HepG2 (cell line): ENCODE measurements at regions of chr21 and their contacts with region 1.

Region 1: GRCh38 chr21:34795175-34795547 is 126.4 kb downstream of the CLIC6 start:
- DNase-seq: no peak
- ATAC-seq: no peak; the same call in 2 of the 3 replicates
- H3K4me3 ChIP-seq: peak overlapping the region in 1 of 3 experiments; percentile 4; a peak in 1 of 6 replicates
- H3K27ac ChIP-seq: peak overlapping the region; percentile 66
- H3K4me1 ChIP-seq: peaks cover 83% of the 10 kb centered on the region
- H3K27me3 ChIP-seq: no peaks in the 10 kb centered on the region
- CTCF ChIP-seq: 0 out of 2 replicates have a peak, but pooled peaks have one; percentile 11
- EP300 ChIP-seq: no peak
- POLR2A ChIP-seq: no peak
- RAD21 ChIP-seq: no peak

Region 2: DNA sequence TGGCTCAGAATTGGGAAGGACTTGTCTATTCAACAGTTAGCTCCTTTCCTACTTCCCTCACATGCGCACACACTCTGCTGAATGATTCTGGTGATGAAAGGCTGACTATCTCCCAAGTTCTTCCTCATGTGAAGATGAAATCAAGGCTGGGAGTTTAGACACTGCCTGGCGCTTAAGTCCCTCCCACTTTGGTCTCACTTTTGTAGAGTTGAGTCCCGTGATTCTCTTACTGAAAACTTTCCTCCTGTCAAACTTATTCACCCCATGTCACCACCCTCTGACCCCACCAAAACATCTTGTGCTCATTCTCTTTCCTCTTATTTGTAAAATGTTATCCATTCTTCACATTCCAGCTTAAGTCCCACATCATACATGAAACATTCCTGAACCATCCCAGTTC is 730.1 kb before region 1 on chr21:
- CTCF ChIA-PET with region 1: no interaction called
- POLR2A ChIA-PET with region 1: no interaction called
- in situ Hi-C with region 1: no loop called
- intact Hi-C with region 1: no loop called
- DNase-seq: no peak
- ATAC-seq: no peak
- H3K4me3 ChIP-seq: no peak overlapping the region
- H3K27ac ChIP-seq: no peak overlapping the region
- H3K4me1 ChIP-seq: peaks cover 12% of the 10 kb centered on the region
- H3K27me3 ChIP-seq: peaks cover 0 to 18% of the 10 kb centered on the region in 2 experiments; a peak in 2 of 5 replicates
- CTCF ChIP-seq: no peak
- EP300 ChIP-seq: no peak
- POLR2A ChIP-seq: no peak
- RAD21 ChIP-seq: no peak

Region 3: DNA sequence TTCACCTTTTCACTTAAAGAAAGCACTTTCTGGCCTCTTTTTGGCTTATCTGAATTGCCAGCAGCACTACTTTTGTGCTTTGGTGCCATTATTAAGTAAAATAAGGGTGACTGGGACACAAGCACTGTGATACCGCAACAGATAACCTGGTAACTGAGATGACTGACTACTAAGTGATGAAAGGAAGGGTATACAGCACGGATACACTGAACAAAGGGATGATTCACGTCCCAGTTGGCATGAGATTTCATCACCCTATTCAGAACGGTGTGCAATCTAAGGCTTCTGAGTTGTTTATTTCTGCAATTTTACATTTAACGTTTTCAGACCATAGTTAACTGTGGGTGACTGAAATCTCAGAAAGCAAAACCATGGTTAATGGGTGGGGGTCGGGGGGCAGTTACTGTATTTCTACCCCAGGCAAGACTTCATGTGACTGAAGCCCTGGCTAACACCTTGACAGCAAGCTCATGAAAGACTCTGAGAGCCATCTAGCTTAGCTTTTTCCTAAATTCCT is 23.6 kb before region 1 on chr21:
- CTCF ChIA-PET with region 1: no interaction called
- POLR2A ChIA-PET with region 1: interaction called, 4 read pairs
- in situ Hi-C with region 1: no loop called
- intact Hi-C with region 1: loop called (anchors 2 kb)
- DNase-seq: peak; percentile 89
- ATAC-seq: peak; percentile 99
- H3K4me3 ChIP-seq: peak overlapping the region in 2 of 3 experiments; percentile 17 to 50; a peak in 2 of 6 replicates
- H3K27ac ChIP-seq: peak overlapping the region; percentile 81
- H3K4me1 ChIP-seq: peaks cover 44% of the 10 kb centered on the region
- H3K27me3 ChIP-seq: no peaks in the 10 kb centered on the region
- CTCF ChIP-seq: no peak
- EP300 ChIP-seq: peak in 1 of 2 experiments; percentile 75; a peak in 2 of 4 replicates
- POLR2A ChIP-seq: peak in 1 of 2 experiments; percentile 52; a peak in 2 of 4 replicates
- RAD21 ChIP-seq: no peak

Region 4: DNA sequence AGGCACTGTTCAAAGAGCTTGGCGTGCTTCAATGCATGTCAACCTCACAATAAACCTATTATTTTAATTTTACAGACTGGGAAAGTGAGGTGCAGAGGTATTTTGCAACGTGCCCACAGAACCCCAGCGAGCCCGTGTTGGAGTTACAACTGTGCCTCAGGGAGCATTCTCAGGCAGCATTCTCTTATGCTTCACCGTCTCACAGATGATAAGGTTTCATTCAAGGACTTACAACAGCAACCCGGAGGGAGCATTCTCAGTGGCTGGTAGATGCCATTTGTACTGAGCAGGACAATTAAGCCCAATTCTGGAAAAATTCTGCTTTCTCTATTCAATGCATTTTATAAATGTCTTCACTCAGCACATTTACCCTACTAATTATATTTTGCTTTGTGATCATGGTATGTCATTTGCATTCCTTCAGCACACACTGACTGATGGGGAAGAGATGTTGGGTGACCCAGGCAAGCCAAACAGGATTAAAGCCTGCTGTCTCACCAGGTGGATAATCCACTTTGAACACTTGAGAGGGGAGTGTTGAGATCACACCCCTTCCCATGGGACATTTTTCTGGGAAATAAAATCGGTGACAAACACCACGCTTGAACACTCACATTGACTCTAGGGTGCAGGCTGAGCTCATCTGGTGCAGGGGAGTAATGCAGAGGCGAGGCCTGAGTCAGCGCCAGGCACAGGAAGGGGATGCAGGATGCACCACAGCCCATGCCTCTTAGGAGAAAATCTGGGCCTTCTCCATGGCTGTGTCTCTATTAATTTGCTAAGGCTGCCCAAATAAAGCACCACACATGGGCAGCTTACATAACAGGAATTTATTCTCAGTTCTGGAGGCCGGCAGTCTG is 12.4 kb before region 1 on chr21:
- CTCF ChIA-PET with region 1: no interaction called
- POLR2A ChIA-PET with region 1: no interaction called
- in situ Hi-C with region 1: no loop called
- intact Hi-C with region 1: no loop called
- DNase-seq: no peak
- ATAC-seq: no peak
- H3K4me3 ChIP-seq: no peak overlapping the region
- H3K27ac ChIP-seq: no peak overlapping the region
- H3K4me1 ChIP-seq: no peaks in the 10 kb centered on the region
- H3K27me3 ChIP-seq: no peaks in the 10 kb centered on the region
- CTCF ChIP-seq: no peak
- EP300 ChIP-seq: no peak
- POLR2A ChIP-seq: no peak
- RAD21 ChIP-seq: no peak